Right lobe of liver (tissue), 6 donors: ENCODE measurements at regions of chr6 and their contacts with region 1.

Region 1: DNA sequence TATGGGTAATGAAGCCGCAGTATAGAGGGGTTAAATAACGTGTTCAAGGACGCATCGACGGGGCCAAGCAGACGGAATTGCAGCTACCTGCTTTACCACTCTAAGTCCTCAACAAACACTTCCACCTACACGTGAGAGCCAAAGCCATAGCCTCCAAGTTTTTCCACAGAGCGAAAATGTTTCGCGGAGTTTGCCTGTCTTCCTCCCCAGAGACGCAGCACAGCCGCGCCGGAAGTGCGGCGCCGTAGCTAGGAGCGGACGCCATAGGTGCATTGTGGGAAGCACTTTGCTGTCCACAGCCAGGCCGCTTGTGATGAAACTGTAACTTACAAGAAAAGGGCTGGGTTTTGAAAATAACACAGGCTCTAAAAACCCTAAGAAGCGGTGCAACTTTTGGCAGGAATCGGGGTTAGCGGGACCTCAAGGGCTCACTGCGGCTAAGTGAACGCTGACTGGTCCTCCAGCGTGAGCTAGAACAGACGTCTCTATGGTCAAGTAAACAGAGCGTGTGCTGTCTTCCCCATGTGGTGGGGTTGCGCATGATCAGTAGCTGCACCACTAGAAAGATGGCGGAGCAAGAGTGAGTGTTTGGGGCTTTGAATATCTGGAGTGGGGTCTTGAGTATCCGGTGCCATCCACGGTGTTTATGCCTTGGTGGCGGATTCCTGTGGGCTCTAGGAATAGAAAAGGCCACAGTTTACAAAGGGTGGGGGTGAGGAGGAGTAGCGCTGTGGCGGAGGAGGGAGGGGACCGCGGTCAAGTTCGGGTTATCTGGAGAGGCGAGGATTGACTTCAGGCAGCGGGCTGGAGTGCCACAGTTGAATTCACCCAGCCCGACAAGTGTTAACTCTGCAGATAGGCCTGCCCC is at the start of gene RPL7L1:
- DNase-seq: peak; percentile 84 to 89 (median 88)
- ATAC-seq: peak; percentile 90 to 95 (median 95)
- H3K4me3 ChIP-seq: peak within 1 kb of the TSS; percentile 77 to 95 (median 78)
- H3K27ac ChIP-seq: peak within 1 kb of the TSS; percentile 86 to 92 (median 92)
- H3K4me1 ChIP-seq: peaks cover 0 to 15% (median 8%) of the 10 kb centered on the region in 4 donors
- H3K27me3 ChIP-seq: no peaks in the 10 kb centered on the region
- CTCF ChIP-seq: peak in 1 of 4 donors; percentile 5
- POLR2A ChIP-seq: peak; percentile 66
- total RNA-seq, gene RPL7L1: 36.6 to 114 (median 44.2) TPM

Region 2: GRCh38 chr6:42661540-42662153 is 218.0 kb before region 1 on chr6:
- intact Hi-C with region 1: loop called in 1 of 2 experiments (anchors 10 kb)
- DNase-seq: peak; percentile 71 to 77 (median 73)
- ATAC-seq: peak; percentile 86 to 96 (median 94)
- H3K4me3 ChIP-seq: no peak overlapping the region
- H3K27ac ChIP-seq: no peak overlapping the region
- H3K4me1 ChIP-seq: no peaks in the 10 kb centered on the region
- H3K27me3 ChIP-seq: no peaks in the 10 kb centered on the region
- CTCF ChIP-seq: peak; percentile 87 to 90 (median 88)
- POLR2A ChIP-seq: no peak

Region 3: DNA sequence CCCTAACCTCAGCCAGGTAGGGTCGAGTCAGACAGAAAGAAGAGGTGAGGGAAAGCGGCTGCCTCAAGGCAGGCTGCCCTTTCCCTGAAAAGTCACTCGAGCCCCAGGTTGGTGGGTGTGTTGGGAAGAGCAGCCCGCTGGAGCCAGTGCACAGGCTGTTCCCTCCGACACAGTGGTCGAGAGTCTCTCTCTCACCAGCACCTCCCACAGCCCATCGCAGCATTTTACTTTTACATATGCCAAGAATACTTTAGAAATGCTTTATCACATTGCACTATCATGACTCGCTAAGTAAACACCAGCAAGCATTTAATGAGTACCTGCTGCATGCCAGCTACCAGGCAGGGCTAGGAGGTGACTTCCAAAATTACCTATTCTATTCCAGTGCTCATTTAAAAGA is 158.9 kb before region 1 on chr6:
- intact Hi-C with region 1: no loop called
- DNase-seq: no peak
- ATAC-seq: peak in 1 of 4 donors; percentile 44
- H3K4me3 ChIP-seq: no peak overlapping the region
- H3K27ac ChIP-seq: no peak overlapping the region
- H3K4me1 ChIP-seq: no peaks in the 10 kb centered on the region
- H3K27me3 ChIP-seq: no peaks in the 10 kb centered on the region
- CTCF ChIP-seq: no peak
- POLR2A ChIP-seq: no peak

Region 4: GRCh38 chr6:42745707-42746462 is 133.7 kb before region 1 on chr6 and contains the start of gene TBCC:
- intact Hi-C with region 1: loop called in 1 of 2 experiments (anchors 10 kb)
- DNase-seq: peak; percentile 95 to 98 (median 97)
- ATAC-seq: peak; percentile 85 to 93 (median 88)
- H3K4me3 ChIP-seq: peak within 1 kb of the TSS; percentile 83 to 98 (median 86)
- H3K27ac ChIP-seq: peak within 1 kb of the TSS; percentile 74 to 93 (median 90)
- H3K4me1 ChIP-seq: peaks cover 0 to 15% (median 3%) of the 10 kb centered on the region in 4 donors
- H3K27me3 ChIP-seq: no peaks in the 10 kb centered on the region
- CTCF ChIP-seq: no peak
- POLR2A ChIP-seq: peak; percentile 98
- total RNA-seq, gene TBCC: 5.4 to 12.2 (median 6.3) TPM

Region 5: DNA sequence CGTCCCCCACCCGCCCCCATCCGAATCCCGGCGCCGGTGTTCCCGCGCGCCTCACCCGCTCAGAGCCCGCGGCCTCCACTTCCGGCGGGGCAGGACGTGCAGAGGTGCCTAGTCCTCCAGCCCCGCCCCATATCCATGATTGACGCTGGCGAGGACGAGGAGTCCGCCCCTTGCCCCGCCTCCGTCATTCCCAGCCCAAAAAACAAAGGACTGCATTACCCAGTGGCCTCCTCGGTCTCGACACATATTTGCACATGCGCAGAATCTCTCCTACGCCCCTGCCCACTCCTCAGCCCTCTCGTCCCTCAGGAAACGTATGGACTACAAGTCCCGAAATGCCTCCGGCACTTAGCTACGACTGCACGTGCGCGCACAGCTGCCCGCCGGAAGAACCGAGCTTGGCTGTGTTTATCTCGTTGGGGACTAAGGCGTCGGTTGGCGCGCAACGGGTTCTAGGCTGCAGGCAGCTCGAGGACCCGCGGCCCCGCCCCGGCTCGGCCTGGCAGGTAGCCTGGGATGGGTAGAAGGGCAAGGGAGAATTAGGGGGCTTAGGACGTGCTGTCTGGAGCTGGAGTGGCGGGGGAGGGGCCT is 134.3 kb after region 1 on chr6 and contains the starts of genes KLHDC3 and MEA1:
- intact Hi-C with region 1: no loop called
- DNase-seq: peak; percentile 98 to 99 (median 99)
- ATAC-seq: peak; percentile 97 to 99 (median 98)
- H3K4me3 ChIP-seq: peak within 1 kb of the TSS; percentile 66 to 71 (median 70)
- H3K27ac ChIP-seq: peak within 1 kb of the TSS; percentile 1 to 69 (median 51)
- H3K4me1 ChIP-seq: peaks cover 0 to 26% (median 7%) of the 10 kb centered on the region in 4 donors
- H3K27me3 ChIP-seq: no peaks in the 10 kb centered on the region
- CTCF ChIP-seq: no peak
- POLR2A ChIP-seq: peak; percentile 34
- total RNA-seq, gene KLHDC3: 26.4 to 46.2 (median 41.7) TPM
- total RNA-seq, gene MEA1: 19.1 to 39.1 (median 25.2) TPM